ENCODE measurements at regions of chr22 and their contacts with region 1.

Region 1: GRCh38 chr22:37658133-37659065 is at the start of gene PDXP:
- DNase-seq: peak; percentile 100
- H3K4me3 ChIP-seq: peak within 1 kb of the TSS; percentile 47 to 84 (median 55)
- H3K27ac ChIP-seq: peak within 1 kb of the TSS; percentile 41
- H3K4me1 ChIP-seq: peaks cover 21% of the 10 kb centered on the region
- H3K27me3 ChIP-seq: no peaks in the 10 kb centered on the region
- CTCF ChIP-seq: no peak
- total RNA-seq, gene PDXP: 5.8 to 6.9 TPM

Region 2: DNA sequence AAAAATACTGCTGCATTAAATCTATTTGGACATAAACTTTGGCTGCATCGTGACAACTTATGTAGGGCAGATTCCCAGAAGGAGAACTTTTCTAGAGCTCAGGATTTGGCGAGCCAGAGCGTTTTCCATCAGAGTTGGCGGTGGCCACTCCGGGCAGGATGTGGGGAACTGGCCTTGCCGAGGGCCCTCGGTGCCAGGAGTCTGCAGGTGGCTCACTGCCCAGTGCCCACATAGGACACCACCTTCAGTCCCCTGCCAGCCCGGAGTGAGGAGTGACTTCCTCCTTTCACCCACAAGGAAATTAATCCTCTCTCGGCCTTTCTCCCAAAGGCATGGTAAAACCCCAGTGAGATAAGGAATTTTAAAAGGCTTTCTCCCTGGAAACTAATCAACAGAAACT is 76.9 kb before region 1 on chr22:
- CTCF ChIA-PET with region 1: no interaction called
- dilution Hi-C with region 1: no loop called
- in situ Hi-C with region 1: no loop called
- intact Hi-C with region 1: no loop called
- DNase-seq: no peak
- H3K4me3 ChIP-seq: no peak overlapping the region
- H3K27ac ChIP-seq: no peak overlapping the region
- H3K4me1 ChIP-seq: peaks cover 3% of the 10 kb centered on the region
- H3K27me3 ChIP-seq: peaks cover 1% of the 10 kb centered on the region
- CTCF ChIP-seq: no peak

Region 3: DNA sequence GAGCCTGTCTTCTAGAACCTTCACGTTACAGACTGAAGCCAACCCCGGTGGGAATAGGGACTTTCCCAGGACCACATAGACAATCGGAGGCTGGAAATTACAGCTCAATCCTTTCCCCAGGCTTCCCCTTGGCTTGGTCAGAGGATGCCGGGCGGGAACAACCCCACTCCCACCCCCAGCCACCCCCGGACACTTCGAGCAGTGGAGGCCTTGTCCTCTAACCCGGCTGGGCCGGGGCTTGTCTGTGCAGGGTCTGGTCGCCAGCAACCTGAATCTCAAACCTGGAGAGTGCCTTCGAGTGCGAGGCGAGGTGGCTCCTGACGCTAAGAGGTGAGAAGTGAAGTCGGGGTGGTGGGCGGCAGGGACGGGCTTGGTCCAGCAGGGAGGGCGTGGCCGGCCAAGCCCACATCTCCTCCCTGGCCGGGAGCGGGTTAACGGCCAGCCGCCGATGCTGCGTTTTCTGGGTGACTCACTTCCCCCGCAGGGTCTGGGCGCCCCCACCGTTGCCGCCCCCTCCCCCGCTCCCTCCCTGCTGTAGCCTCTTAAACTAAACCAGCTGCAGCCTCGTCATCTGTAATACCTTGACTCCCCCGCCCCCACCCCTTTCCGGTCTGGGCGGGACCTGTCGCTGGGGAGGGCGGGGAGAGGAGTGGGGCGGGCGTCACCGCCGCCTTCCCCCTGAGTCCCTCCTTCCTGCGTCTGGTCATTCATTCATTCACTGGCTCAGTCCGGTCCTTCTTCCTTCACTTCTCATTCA is 18.5 kb after region 1 on chr22:
- CTCF ChIA-PET with region 1: interaction called, 4 read pairs
- dilution Hi-C with region 1: no loop called
- in situ Hi-C with region 1: no loop called
- intact Hi-C with region 1: loop called (anchors 1 kb)
- DNase-seq: peak; percentile 96
- H3K4me3 ChIP-seq: peak overlapping the region; percentile 67 to 76 (median 72)
- H3K27ac ChIP-seq: peak overlapping the region; percentile 78
- H3K4me1 ChIP-seq: peaks cover 33% of the 10 kb centered on the region
- H3K27me3 ChIP-seq: no peaks in the 10 kb centered on the region
- CTCF ChIP-seq: no peak

Region 4: GRCh38 chr22:37832022-37832857 is 173.8 kb after region 1 on chr22:
- CTCF ChIA-PET with region 1: no interaction called
- dilution Hi-C with region 1: no loop called
- in situ Hi-C with region 1: no loop called
- intact Hi-C with region 1: no loop called
- DNase-seq: no peak
- H3K4me3 ChIP-seq: no peak overlapping the region
- H3K27ac ChIP-seq: no peak overlapping the region
- H3K4me1 ChIP-seq: no peaks in the 10 kb centered on the region
- H3K27me3 ChIP-seq: no peaks in the 10 kb centered on the region
- CTCF ChIP-seq: no peak